ENCODE measurements at regions of chr15 and their contacts with region 1.

Region 1: DNA sequence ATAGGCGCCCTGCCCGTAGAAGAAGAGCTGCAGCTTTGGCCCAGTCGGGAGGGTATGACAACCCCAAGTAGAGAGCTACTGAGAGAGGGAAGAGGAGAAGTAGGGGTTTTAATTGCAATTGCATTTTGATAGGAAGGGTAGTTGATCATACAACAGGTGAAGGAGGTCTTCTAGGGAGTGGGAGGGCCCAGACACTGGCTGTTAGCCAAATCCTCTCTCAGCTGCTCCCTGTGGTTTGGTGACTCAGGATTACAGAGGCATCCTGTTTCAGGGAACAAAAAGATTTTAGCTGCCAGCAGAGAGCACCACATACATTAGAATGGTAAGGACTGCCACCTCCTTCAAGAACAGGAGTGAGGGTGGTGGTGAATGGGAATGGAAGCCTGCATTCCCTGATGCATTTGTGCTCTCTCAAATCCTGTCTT is 408.9 kb upstream of the THBS1 start:
- DNase-seq: peak; percentile 66
- ATAC-seq: peak; percentile 96
- H3K4me3 ChIP-seq: no peak overlapping the region
- H3K27ac ChIP-seq: peak overlapping the region; percentile 24
- H3K4me1 ChIP-seq: peaks cover 11% of the 10 kb centered on the region
- H3K27me3 ChIP-seq: no peaks in the 10 kb centered on the region
- CTCF ChIP-seq: peak; percentile 49

Region 2: DNA sequence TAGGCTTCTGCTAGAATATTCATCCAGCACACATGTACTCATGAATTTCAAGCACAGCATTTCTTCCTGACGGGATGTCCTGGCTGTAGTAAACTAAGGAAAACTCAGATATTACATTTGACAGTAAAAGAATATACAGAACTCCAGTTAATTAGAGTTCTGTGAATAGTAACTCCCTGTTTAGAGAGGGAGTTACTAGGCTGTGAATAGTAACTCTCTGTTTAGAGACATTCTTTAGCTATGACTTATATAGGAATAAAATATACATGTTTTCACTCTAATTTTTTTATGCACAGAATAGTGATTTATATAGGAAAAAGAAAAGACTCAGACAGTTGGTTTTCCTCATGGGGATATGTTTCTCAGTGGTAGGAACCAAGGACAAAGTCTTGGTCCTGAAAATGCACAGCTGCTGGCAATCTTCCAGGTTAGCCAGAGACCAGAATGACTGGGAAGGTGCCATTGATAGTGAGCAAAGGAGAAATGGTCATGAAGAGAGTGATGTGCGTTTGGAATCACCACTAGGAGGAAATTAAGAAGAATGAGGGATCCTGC is 71.8 kb before region 1 on chr15:
- intact Hi-C with region 1: no loop called
- DNase-seq: no peak
- ATAC-seq: no peak
- H3K4me3 ChIP-seq: no peak overlapping the region
- H3K27ac ChIP-seq: no peak overlapping the region
- H3K4me1 ChIP-seq: no peaks in the 10 kb centered on the region
- H3K27me3 ChIP-seq: no peaks in the 10 kb centered on the region
- CTCF ChIP-seq: no peak

Region 3: DNA sequence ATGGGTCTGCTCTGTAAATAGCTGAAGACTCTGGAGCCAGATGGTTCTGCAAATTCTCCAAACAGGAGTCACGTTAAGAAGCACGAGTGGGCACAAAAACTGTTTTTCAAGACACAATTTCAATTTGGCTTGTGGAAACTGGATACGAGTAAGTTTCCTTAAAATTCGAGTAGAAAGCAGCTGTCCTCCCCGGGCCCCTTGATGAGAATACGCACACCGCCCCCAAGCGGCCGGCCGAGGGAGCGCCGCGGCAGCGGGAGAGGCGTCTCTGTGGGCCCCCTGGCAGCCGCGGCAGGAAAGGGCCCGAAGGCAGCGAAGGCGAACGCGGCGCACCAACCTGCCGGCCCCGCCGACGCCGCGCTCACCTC is 408.1 kb after region 1 on chr15:
- intact Hi-C with region 1: loop called (anchors 5 kb)
- DNase-seq: peak; percentile 97
- ATAC-seq: peak; percentile 92
- H3K4me3 ChIP-seq: peak overlapping the region; percentile 60
- H3K27ac ChIP-seq: peak overlapping the region; percentile 91
- H3K4me1 ChIP-seq: peaks cover 4% of the 10 kb centered on the region
- H3K27me3 ChIP-seq: no peaks in the 10 kb centered on the region
- CTCF ChIP-seq: peak; percentile 95